GM13977 (cell line): ENCODE measurements at regions of chr6 and their contacts with region 1.

Region 1: DNA sequence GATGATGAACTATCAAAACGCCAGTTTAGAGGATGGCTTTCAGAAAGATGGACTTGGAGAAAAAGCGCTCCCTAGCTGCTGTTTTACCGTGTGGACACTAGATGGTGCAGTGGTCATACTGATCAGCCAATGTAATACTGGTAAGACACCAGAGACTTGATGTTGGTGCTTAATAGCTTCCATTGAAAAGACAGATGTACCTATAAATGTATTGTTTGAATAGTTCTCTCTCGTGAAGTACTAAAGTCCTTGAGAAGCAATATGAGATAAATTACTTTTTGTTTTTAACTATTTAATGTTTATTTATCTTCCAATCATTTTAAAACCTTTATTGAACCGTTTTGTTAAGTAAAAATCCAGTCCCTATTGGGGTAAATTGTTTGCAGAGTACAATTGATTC is 63.9 kb upstream of the FUCA2 start:
- DNase-seq: peak; percentile 78
- CTCF ChIP-seq: peak; percentile 84

Region 2: DNA sequence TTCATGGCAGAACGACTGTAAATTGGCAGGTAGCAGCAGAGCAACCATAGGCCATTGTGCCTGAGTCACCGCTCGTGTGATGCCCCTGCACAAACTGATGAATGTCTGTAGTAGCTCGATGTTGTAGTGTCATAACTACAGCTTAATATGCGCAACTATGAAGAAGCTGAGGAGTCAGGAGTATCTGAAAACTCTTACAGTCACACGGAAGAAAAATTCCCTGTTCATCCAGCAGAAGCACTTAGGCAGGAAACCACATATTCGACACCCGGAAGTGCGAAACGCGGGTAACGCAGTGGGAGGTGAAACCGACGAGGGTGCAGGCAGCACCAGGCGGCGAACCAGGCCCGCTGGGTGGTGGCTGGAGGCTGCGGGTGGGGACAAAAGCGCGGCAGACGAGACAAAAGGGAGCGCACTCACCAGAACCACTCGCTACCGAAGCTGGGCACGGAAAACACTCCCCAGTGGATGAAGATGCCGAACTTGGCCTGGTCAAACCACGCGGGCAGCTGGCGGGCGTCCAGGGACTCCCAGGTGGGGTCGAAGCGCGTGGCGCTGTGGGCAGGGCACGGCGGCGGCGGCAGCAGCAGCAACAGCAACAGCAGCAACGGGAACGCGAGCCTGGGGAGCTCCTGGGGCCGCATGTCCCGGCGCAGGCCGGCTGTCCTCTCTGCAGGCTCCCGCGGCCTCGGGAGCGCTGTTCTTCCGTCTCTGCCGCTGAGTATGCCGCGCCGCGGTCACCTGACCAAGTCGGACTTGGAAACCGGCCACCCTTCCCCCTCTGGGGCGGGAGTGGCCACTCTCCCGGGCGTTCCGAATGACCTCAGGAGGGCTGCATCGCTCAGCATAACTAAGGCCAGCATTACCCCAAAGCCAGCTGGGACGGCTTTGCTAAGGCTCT is 64.2 kb before region 1 on chr6 and contains the start of gene FUCA2:
- in situ Hi-C with region 1: loop called (anchors 10 kb)
- DNase-seq: peak; percentile 64
- CTCF ChIP-seq: no peak

Region 3: DNA sequence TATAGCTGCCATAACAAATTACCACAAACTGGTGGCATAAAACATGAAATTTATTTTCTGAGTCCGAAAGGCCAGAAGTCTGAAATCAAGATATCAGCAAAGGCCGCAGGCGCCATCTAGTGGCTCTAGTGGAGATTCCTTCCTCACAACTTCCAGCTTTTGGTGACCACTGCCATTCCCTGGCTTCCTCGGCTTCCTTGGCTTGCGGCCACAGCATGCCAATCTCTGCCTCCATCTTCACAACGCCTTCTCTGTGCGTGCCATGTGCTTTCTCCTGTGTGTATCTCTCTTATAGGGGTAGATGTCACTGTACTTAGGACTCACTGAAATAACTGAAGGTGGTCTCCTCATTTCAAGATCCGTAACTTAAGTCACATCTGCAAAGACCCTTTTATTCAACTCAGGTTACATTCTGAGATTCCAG is 438.1 kb after region 1 on chr6:
- in situ Hi-C with region 1: loop called (anchors 10 kb)
- DNase-seq: peak; percentile 54
- CTCF ChIP-seq: peak; percentile 83

Region 4: GRCh38 chr6:144482142-144482541 is 906.7 kb after region 1 on chr6:
- in situ Hi-C with region 1: loop called (anchors 25 kb)
- DNase-seq: peak; percentile 73
- CTCF ChIP-seq: peak; percentile 80